ENCODE measurements at regions of chr1 and their contacts with region 1.

Region 1: DNA sequence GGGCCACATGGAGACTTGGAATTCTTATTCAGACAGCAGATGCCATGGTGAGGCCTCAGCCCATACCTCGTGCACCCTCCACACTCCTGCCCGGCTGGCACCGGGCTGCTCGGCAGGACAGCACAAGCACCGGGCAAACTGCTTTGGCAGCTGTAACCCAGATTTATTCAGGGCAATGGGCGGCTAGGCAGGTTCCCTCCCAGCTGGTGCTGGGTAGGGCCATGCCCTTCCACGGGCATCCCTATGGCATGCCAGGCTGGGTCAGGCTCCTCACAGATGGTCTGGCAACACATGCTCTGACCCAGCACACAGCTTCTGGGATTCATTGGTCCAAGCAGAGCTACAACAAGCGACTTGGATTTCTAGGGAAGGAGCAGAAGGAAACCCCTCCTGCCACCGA is 53.4 kb downstream of the ATP1A1 start:
- DNase-seq: no peak
- H3K4me3 ChIP-seq: no peak overlapping the region
- H3K27ac ChIP-seq: no peak overlapping the region
- H3K4me1 ChIP-seq: peaks cover 0 to 6% (median 0%) of the 10 kb centered on the region in 3 donors
- H3K27me3 ChIP-seq: no peaks in the 10 kb centered on the region
- CTCF ChIP-seq: no peak
- POLR2A ChIP-seq: no peak

Region 2: GRCh38 chr1:116472431-116472961 is 46.1 kb after region 1 on chr1:
- intact Hi-C with region 1: loop called (anchors 10 kb)
- DNase-seq: no peak
- H3K4me3 ChIP-seq: no peak overlapping the region
- H3K27ac ChIP-seq: no peak overlapping the region
- H3K4me1 ChIP-seq: peaks cover 0 to 4% (median 0%) of the 10 kb centered on the region in 3 donors
- H3K27me3 ChIP-seq: no peaks in the 10 kb centered on the region
- CTCF ChIP-seq: no peak
- POLR2A ChIP-seq: no peak